ENCODE measurements at regions of chr2 and their contacts with region 1.

Region 1: DNA sequence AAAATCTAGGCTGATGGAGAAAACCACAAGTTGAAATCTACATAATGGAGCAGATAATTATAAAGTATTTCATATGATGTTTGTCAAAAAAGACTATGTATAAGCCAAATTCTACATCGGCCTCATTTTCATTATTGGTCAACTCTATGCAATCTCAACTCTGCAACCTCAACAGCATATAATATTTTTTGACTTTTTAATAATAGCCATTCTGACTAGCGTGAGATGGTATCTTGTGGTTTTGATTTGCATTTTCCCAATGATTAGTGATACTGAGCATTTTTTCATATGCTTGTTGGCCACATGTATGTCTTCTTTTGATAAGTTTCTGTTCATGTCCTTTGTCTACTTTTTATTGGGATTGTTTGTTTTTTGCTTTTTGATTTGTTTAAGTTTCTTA is 496.1 kb upstream of the SLC39A10 start:
- DNase-seq: no peak
- ATAC-seq: no peak
- H3K4me3 ChIP-seq: no peak overlapping the region
- H3K27ac ChIP-seq: no peak overlapping the region
- H3K4me1 ChIP-seq: no peaks in the 10 kb centered on the region
- H3K27me3 ChIP-seq: no peaks in the 10 kb centered on the region
- CTCF ChIP-seq: no peak
- POLR2A ChIP-seq: no peak
- RAD21 ChIP-seq: no peak

Region 2: DNA sequence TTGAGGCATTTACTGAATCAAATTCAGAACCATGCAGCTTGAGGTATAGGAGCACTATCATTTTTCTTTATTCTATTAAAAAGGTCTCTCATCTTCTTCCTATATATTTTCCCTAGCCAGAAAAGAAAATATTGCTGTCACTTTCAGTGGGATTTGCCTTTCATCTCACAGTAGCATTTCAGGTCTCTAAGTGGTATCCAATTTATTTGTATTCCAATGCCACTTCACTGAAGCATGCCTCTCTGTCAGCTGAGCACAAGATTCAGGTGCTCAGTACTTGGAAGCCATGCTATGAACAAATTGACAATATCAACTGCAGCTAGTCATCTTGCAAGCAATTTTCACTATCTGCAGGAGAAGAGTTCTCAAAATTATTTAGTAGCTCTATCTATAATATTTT is 38.9 kb after region 1 on chr2:
- CTCF ChIA-PET with region 1: interaction called, 10 read pairs
- POLR2A ChIA-PET with region 1: no interaction called
- dilution Hi-C with region 1: no loop called
- in situ Hi-C with region 1: no loop called
- intact Hi-C with region 1: no loop called
- DNase-seq: no peak
- ATAC-seq: no peak
- H3K4me3 ChIP-seq: no peak overlapping the region
- H3K27ac ChIP-seq: no peak overlapping the region
- H3K4me1 ChIP-seq: no peaks in the 10 kb centered on the region
- H3K27me3 ChIP-seq: no peaks in the 10 kb centered on the region
- CTCF ChIP-seq: no peak
- POLR2A ChIP-seq: no peak
- RAD21 ChIP-seq: no peak